Left lung (tissue), 14 donors: ENCODE measurements at regions of chr1 and their contacts with region 1.

Region 1: DNA sequence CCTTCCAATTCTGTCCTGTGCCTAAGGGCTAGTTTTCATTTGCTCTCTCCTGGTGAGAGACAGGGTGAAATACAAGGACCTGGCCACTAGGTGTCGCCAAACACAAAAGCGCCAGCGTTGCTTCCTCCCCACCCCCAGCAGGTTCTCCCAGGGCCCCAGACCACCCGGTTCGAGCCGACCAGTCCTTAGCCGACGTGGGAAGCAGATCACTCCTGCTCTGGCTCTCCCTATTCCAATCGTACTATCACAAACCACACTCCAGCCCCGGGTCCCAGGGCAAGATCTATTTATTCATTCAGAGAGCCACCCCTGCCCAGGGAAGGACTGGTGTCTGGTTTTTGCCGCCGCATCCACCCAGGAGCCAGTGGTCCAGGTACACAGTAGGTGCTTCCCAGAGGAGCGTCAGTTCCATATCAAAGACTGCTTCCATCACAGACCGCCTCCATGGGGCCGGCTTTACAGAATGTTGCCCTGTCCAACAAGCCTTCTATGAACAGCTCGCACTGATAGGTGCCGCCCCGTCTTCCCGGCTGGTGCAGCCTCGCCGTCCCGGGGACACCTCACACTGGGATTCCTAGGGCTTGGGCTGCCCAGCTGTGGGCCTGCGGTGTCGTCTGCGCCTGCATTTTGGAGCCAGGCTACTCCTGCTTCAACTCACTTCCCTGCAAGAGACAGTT is 35.0 kb downstream of the CTNNBIP1 start:
- DNase-seq: peak in 3 of 4 donors; percentile 62 to 82 (median 69)
- ATAC-seq: peak; percentile 93
- H3K4me3 ChIP-seq: no peak overlapping the region
- H3K27ac ChIP-seq: no peak overlapping the region
- H3K4me1 ChIP-seq: peaks cover 0 to 12% of the 10 kb centered on the region in 2 donors
- H3K27me3 ChIP-seq: no peaks in the 10 kb centered on the region
- CTCF ChIP-seq: peak; percentile 92 to 93

Region 2: DNA sequence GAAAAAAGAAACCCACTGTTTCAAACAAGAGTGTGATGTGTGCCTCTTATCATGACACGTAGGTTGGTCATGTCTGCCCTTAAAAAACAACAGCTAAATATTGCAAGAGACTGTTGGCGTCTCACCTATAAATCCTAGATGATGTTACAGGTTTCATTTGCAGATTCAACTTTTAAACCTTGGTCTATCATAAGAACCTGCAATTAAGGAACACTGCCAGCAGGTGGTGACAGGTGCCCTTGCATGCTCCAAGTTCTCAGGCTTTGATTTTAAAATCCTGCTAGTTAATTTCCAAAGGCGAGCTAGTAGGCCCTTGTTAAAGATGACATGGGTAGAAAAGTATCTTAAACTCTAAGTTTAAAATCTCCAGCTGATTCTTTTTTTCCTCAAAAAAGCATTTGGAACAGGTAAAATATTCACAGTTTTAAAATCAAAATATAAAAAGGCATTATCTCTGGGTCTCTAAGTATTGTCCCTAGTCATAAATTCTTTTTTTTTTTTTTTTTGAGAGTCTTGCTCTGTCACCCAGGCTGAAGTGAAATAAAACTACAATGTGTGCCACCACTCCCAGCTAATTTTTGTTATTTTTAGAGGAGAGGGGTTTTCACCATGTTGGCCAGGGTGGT is 90.5 kb before region 1 on chr1:
- intact Hi-C with region 1: no loop called
- DNase-seq: peak in 1 of 4 donors; percentile 44
- ATAC-seq: peak; percentile 87
- H3K4me3 ChIP-seq: no peak overlapping the region
- H3K27ac ChIP-seq: no peak overlapping the region
- H3K4me1 ChIP-seq: peaks cover 0 to 6% of the 10 kb centered on the region in 2 donors
- H3K27me3 ChIP-seq: no peaks in the 10 kb centered on the region
- CTCF ChIP-seq: peak; percentile 49 to 65

Region 3: DNA sequence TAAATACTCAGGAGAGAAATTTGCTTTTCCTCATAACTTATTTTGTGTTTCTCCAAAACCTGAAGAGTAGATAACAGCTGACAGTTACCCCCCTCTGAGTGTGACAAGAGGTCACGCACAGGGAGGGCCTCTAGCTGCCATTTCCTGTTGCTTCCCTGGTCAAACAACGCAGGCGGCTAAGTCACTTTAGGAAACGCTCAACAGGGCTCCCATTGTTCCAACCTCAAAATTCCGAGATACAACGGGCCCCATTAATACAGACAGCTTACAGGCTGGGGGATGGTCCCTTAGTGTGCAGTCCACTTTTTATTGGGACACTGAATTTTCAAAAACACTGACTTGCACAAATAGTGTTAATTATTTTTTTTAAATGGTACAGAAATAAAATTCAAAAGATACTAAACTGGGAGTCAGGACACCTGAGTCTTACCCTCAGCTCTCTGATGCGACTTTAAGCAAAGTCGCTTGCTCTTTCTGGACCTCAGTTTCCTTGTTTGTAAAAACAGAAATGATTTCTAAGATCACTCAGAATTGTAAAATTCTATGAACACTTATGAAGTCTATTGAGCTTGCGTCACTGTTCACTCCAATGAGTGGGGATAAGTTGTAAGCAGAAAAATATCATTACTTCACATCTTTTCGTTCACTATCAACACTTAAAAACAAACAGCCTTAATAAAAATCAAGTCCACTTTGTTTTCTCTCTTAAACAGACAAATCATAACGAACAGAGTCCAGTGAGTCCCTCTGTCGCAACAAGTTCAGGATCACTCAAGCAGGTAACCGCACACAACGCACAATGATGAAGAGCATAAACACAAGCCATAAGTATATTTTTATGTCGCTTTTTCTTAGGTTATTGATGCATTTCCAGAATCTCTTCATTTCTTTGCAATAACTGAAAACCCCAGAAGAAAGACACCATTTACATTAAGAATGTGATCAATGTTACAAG is 54.6 kb after region 1 on chr1:
- intact Hi-C with region 1: loop called in 1 of 2 experiments (anchors 10 kb)
- DNase-seq: no peak
- ATAC-seq: no peak
- H3K4me3 ChIP-seq: no peak overlapping the region
- H3K27ac ChIP-seq: no peak overlapping the region
- H3K4me1 ChIP-seq: no peaks in the 10 kb centered on the region
- H3K27me3 ChIP-seq: no peaks in the 10 kb centered on the region
- CTCF ChIP-seq: no peak